ENCODE measurements at regions of chr21 and their contacts with region 1.

Region 1: GRCh38 chr21:17819114-17819876 is at the start of gene C21orf91:
- DNase-seq: peak; percentile 55 to 86
- H3K4me3 ChIP-seq: peak within 1 kb of the TSS; percentile 85
- H3K27ac ChIP-seq: peak within 1 kb of the TSS; percentile 91
- H3K4me1 ChIP-seq: peaks cover 23% of the 10 kb centered on the region
- H3K27me3 ChIP-seq: no peaks in the 10 kb centered on the region
- CTCF ChIP-seq: no peak
- total RNA-seq, gene C21orf91: 14.5 and 15.5 TPM in 2 replicates

Region 2: DNA sequence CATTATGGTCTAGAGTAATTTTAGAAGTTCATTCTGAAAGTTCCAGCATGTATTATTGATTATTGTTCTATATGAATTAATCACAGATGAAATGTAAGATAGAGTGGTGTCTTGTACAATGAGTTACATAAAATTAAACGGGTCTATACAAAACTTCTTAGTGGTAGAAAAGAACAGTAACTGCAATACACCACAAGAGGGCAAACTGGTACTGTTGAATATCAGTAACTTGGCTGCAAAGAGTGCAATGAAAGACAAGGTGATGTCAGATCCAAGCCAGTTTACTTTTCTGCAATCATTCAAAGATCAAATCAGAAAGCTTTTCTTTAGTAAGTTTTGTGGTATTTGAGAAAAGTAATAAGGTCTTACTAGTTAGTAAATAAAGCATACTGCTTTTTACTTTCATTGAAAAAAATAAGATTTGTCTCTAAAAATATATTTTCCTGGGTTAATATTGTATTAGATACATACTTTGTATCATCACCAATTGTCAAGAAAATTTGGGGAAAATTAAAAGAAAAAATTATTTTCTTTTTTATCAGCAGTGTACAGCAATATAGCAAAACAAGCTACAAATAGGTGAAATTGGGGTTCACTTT is 140.2 kb before region 1 on chr21:
- CTCF ChIA-PET with region 1: no interaction called
- POLR2A ChIA-PET with region 1: no interaction called
- intact Hi-C with region 1: loop called (anchors 2 kb)
- DNase-seq: peak in 1 of 2 experiments; percentile 39
- H3K4me3 ChIP-seq: no peak overlapping the region
- H3K27ac ChIP-seq: no peak overlapping the region
- H3K4me1 ChIP-seq: no peaks in the 10 kb centered on the region
- H3K27me3 ChIP-seq: no peaks in the 10 kb centered on the region
- CTCF ChIP-seq: peak; percentile 87

Region 3: DNA sequence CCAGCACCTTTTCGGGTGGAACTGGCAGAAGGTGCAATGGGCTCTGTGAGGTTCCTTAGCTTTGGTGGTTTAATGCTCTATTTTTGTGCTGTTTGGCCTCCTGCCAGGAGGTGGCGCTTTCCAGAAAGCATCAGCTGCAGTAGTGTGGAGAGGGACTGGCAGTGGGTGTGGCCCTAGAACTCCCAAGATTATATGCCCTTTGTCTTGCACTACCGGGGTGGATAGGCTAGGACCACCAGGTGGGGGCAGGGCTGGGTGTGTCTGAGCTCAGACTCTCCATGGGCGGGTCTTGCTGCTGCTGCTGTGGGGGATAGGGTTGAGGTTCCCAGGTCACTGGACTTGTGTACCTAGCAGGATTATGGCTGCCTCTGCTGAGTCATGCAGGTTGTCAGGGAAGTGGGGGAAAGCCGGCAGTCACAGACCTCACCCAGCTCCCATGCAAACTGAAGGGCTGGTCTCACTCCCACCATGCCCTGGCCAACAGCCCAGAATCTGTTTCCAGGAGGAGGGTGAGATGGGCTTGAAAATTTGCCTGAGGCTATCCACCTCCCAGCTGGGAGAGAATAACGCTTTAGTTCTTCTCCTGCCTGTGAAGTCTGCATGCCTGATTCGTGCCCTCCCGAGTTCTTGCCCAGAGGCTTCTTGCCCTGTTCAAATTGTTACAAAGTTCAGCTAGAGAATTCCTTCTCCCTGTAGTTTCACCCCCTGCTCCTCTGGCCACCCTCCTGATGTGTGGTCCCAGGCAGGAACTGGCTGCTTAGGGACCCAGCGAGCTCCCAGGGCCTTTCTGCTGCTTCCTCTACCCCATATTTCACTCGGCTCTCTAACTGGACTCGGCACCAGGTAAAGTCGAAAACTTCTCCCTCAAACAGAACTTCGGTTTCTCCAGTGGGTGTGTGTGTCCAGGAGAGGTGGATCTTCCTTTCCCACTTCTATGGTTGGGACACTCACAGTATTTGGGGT is 130.1 kb before region 1 on chr21:
- CTCF ChIA-PET with region 1: no interaction called
- POLR2A ChIA-PET with region 1: interaction called, 3 read pairs
- intact Hi-C with region 1: loop called (anchors 1 kb)
- DNase-seq: peak; percentile 89 to 90
- H3K4me3 ChIP-seq: peak overlapping the region; percentile 41; the same call in 1 of the 2 replicates
- H3K27ac ChIP-seq: peak overlapping the region; percentile 95
- H3K4me1 ChIP-seq: peaks cover 26% of the 10 kb centered on the region
- H3K27me3 ChIP-seq: no peaks in the 10 kb centered on the region
- CTCF ChIP-seq: peak; percentile 73

Region 4: DNA sequence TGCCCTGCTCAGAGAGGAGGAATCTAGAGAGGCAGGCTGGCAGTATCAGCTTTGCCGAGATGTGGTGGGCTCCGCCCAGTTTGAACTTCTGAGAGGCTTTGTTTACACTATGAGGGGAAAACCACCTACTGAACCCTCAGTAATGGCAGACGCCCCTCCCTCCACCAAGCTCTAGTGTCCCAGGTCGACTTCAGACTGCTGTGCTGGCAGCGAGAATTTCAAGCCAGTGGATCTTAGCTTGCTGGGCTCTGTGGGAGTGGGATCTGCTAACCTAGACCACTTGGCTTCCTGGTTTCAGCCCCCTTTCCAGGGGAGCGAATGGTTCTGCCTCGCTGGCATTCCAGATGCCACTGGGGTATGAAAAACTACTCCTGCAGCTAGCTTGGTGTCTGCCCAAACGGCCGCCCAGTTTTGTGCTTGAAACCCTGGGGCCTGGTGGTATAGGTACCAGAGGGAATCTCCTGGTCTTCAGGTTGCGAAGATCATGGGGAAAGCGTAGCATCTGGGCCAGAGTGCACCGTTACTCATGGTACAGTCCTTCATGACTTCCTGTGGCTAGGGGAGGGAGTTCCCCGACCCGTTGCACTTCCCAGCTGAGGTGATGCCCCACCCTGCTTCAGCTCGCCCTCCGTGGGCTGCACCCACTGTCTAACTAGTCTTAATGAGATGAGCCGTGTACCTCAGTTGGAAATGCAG is 43.7 kb before region 1 on chr21:
- CTCF ChIA-PET with region 1: no interaction called
- POLR2A ChIA-PET with region 1: no interaction called
- intact Hi-C with region 1: no loop called
- DNase-seq: no peak
- H3K4me3 ChIP-seq: no peak overlapping the region
- H3K27ac ChIP-seq: no peak overlapping the region
- H3K4me1 ChIP-seq: no peaks in the 10 kb centered on the region; the same call in 1 of the 2 replicates
- H3K27me3 ChIP-seq: no peaks in the 10 kb centered on the region
- CTCF ChIP-seq: no peak

Region 5: GRCh38 chr21:17793246-17794123 is 25.8 kb before region 1 on chr21:
- CTCF ChIA-PET with region 1: no interaction called
- POLR2A ChIA-PET with region 1: no interaction called
- intact Hi-C with region 1: no loop called
- DNase-seq: no peak
- H3K4me3 ChIP-seq: no peak overlapping the region
- H3K27ac ChIP-seq: no peak overlapping the region
- H3K4me1 ChIP-seq: no peaks in the 10 kb centered on the region; the same call in 1 of the 2 replicates
- H3K27me3 ChIP-seq: no peaks in the 10 kb centered on the region
- CTCF ChIP-seq: no peak

Region 6: DNA sequence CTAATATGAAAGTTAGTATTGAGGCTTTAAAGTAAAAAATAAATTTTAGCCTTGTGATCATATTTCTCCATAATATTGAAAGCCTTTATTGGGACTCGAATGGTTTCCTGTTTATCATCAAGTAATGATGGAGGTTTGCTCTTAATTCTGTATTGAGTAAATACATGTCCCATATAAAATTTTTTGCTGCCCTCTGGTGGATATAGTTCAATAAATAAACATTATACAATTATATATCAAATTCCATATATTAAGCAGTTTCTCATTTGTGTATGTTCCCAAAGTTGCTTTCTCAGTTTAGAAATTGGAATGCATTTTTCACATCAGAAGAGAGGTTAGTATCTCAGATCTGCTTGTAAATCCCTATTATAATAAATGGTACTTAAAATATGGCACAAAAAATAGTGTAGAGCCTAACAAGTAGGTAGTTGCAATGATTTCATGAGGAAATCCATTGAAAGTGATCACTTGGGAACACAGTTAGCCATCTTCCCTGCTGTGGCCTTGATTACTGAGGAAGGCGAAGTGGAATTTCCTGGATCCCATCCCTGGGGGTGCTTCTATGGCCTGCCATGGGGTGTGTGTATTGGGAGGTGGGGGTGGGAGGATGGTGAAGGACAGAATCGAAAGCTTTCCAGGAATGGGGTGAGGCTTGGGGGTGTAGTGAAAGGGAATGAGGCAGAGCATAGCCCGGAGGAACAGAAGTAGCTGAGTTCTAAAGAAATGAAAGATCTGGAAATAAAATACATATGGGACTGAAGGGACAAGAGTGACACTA is 83.9 kb after region 1 on chr21:
- CTCF ChIA-PET with region 1: no interaction called
- POLR2A ChIA-PET with region 1: no interaction called
- intact Hi-C with region 1: loop called (anchors 5 kb)
- DNase-seq: peak in 1 of 2 experiments; percentile 49
- H3K4me3 ChIP-seq: no peak overlapping the region
- H3K27ac ChIP-seq: no peak overlapping the region
- H3K4me1 ChIP-seq: peaks cover 7% of the 10 kb centered on the region
- H3K27me3 ChIP-seq: no peaks in the 10 kb centered on the region
- CTCF ChIP-seq: peak; percentile 58

Region 7: GRCh38 chr21:18114810-18115209 is 295.5 kb after region 1 on chr21:
- CTCF ChIA-PET with region 1: no interaction called
- POLR2A ChIA-PET with region 1: interaction called, 10 read pairs
- intact Hi-C with region 1: no loop called
- DNase-seq: no peak
- H3K4me3 ChIP-seq: no peak overlapping the region
- H3K27ac ChIP-seq: no peak overlapping the region
- H3K4me1 ChIP-seq: no peaks in the 10 kb centered on the region
- H3K27me3 ChIP-seq: no peaks in the 10 kb centered on the region
- CTCF ChIP-seq: no peak

Region 8: DNA sequence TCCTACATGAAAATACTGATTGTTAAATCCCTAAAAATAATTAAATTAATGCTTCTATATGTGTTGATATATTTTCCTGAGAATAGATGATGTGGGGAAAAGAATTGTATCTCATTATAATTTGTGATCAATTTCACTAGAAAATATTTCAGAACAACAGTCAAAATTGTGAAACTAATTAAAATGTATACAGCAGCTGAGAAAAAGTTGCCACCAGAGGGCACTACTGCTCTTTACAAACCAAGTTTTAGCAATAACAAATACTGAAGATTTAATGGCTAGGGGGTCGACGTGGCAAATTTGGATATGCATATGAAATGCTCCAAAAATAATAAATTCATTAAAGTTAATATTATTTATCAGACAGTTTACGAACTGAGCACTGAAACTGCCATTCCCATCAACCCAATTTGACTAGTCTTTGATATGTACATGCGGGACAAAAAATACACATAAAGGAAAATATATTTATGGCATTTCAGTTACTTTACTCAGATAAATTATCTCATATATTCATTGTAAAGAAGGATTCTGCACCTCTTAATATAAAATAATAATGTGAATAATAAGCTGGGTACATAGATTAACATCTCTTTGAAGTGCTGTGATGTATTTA is 680.6 kb after region 1 on chr21:
- CTCF ChIA-PET with region 1: no interaction called
- POLR2A ChIA-PET with region 1: no interaction called
- intact Hi-C with region 1: no loop called
- DNase-seq: peak in 1 of 2 experiments; percentile 4
- H3K4me3 ChIP-seq: no peak overlapping the region
- H3K27ac ChIP-seq: no peak overlapping the region
- H3K4me1 ChIP-seq: no peaks in the 10 kb centered on the region
- H3K27me3 ChIP-seq: no peaks in the 10 kb centered on the region
- CTCF ChIP-seq: peak; percentile 81